Heart right ventricle (tissue), 16 donors: ENCODE measurements at regions of chr7 and their contacts with region 1.

Region 1: GRCh38 chr7:27130540-27131389 is at the start of gene HOXA4:
- DNase-seq: peak; percentile 61 to 63
- ATAC-seq: peak; percentile 62 to 94 (median 87)
- H3K4me3 ChIP-seq: peak within 1 kb of the TSS; percentile 17 to 58 (median 48)
- H3K27ac ChIP-seq: peak within 1 kb of the TSS in 7 of 10 donors; percentile 28 to 88 (median 70)
- H3K4me1 ChIP-seq: peaks cover 0 to 14% (median 0%) of the 10 kb centered on the region in 9 donors
- H3K27me3 ChIP-seq: peaks cover 45 to 100% (median 99%) of the 10 kb centered on the region in 7 donors
- CTCF ChIP-seq: no peak
- total RNA-seq, gene HOXA4: 0.20 to 1.1 (median 0.48) TPM in 6 of 10 donors, not detected in the others

Region 2: GRCh38 chr7:27095897-27096767 is 34.6 kb before region 1 on chr7 and contains the start of gene HOXA1:
- intact Hi-C with region 1: loop called in 1 of 10 experiments (anchors 5 kb)
- DNase-seq: peak in 1 of 2 donors; percentile 16
- ATAC-seq: peak in 7 of 8 donors; percentile 63 to 83 (median 73)
- H3K4me3 ChIP-seq: peak within 1 kb of the TSS; percentile 52 to 87 (median 57)
- H3K27ac ChIP-seq: peak within 1 kb of the TSS in 9 of 10 donors; percentile 19 to 92 (median 65)
- H3K4me1 ChIP-seq: peaks cover 0 to 41% (median 27%) of the 10 kb centered on the region in 9 donors
- H3K27me3 ChIP-seq: peaks cover 17 to 100% (median 100%) of the 10 kb centered on the region in 7 donors
- CTCF ChIP-seq: no peak
- total RNA-seq, gene HOXA1: 0.15 to 0.37 TPM in 2 of 10 donors, not detected in the others